ENCODE measurements at regions of chr15 and their contacts with region 1.

Region 1: GRCh38 chr15:59725172-59725486 is 36.0 kb upstream of the BNIP2 start:
- DNase-seq: no peak
- ATAC-seq: no peak
- H3K4me3 ChIP-seq: no peak overlapping the region
- H3K4me3 Mint-ChIP-seq: no peak overlapping the region
- H3K27ac ChIP-seq: no peak overlapping the region
- H3K27ac Mint-ChIP-seq: no peak overlapping the region
- H3K4me1 ChIP-seq: no peaks in the 10 kb centered on the region
- H3K4me1 Mint-ChIP-seq: no peaks in the 10 kb centered on the region
- H3K27me3 ChIP-seq: peaks cover 0 to 18% of the 10 kb centered on the region in 2 experiments
- H3K27me3 Mint-ChIP-seq: peaks cover 23% of the 10 kb centered on the region
- CTCF ChIP-seq: peak; percentile 39

Region 2: GRCh38 chr15:59678620-59679019 is 46.5 kb before region 1 on chr15:
- CTCF ChIA-PET with region 1: no interaction called
- POLR2A ChIA-PET with region 1: no interaction called
- intact Hi-C with region 1: no loop called
- DNase-seq: no peak
- ATAC-seq: no peak
- H3K4me3 ChIP-seq: no peak overlapping the region
- H3K4me3 Mint-ChIP-seq: no peak overlapping the region
- H3K27ac ChIP-seq: no peak overlapping the region
- H3K27ac Mint-ChIP-seq: no peak overlapping the region
- H3K4me1 ChIP-seq: no peaks in the 10 kb centered on the region
- H3K4me1 Mint-ChIP-seq: peaks cover 6% of the 10 kb centered on the region
- H3K27me3 ChIP-seq: no peaks in the 10 kb centered on the region
- H3K27me3 Mint-ChIP-seq: no peaks in the 10 kb centered on the region
- CTCF ChIP-seq: no peak

Region 3: DNA sequence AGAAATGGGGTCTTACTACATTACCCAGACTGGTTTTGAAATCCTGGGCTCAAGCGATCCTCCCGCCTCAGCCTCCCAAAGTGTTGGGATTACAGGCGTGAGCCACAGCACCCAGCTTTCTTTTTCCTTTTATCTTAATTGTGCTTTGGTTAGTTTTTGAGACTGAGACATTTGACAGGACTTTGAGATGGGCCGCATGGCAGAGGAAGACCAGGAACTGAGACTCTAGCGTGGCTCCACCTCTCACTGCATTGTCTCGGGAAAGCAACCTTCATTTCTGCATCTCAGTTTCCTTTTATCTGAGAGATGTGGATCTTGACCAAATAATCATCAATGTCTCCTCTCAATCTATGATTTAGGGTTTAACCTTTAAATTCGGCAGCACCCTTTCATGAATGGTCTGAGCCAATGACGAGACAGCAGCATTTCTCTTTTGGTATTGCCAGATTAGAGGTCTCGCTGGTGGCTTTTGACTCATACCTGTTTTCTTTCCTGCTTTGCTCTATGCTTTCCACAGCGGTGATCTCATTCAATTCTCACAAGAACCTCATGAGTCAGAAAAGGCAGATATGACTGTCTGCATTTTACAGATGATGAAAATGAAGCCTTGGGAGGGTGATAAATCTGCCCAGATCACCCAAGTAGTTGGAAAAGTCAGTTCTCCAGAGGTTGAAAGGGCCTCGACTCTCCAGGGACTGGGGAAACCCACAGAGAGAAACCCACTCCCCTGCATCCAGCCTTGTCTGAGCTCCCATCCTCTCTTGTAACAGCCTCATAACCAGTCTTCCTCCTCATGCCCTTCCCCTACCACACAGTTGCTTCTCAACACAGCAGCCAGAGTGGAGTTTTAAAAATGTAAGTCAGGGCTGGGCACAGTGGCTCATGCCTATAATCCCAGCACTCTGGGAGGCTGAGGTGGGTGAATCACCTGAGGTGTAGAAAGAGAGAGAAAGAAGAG is 194.1 kb after region 1 on chr15:
- CTCF ChIA-PET with region 1: no interaction called
- POLR2A ChIA-PET with region 1: no interaction called
- intact Hi-C with region 1: no loop called
- DNase-seq: peak in 8 of 14 experiments; percentile 7 to 48 (median 31)
- ATAC-seq: peak; percentile 74
- H3K4me3 ChIP-seq: peak overlapping the region; percentile 2
- H3K4me3 Mint-ChIP-seq: peak overlapping the region; percentile 55
- H3K27ac ChIP-seq: no peak overlapping the region
- H3K27ac Mint-ChIP-seq: peak overlapping the region; percentile 8
- H3K4me1 ChIP-seq: peaks cover 19% of the 10 kb centered on the region
- H3K4me1 Mint-ChIP-seq: peaks cover 31% of the 10 kb centered on the region
- H3K27me3 ChIP-seq: no peaks in the 10 kb centered on the region
- H3K27me3 Mint-ChIP-seq: peaks cover 18% of the 10 kb centered on the region
- CTCF ChIP-seq: no peak

Region 4: GRCh38 chr15:60179786-60180391 is 454.8 kb after region 1 on chr15:
- CTCF ChIA-PET with region 1: interaction called, 5 read pairs
- POLR2A ChIA-PET with region 1: no interaction called
- intact Hi-C with region 1: loop called (anchors 1 kb)
- DNase-seq: peak in 11 of 14 experiments; percentile 2 to 72 (median 14)
- ATAC-seq: peak; percentile 64
- H3K4me3 ChIP-seq: no peak overlapping the region
- H3K4me3 Mint-ChIP-seq: no peak overlapping the region
- H3K27ac ChIP-seq: no peak overlapping the region
- H3K27ac Mint-ChIP-seq: no peak overlapping the region
- H3K4me1 ChIP-seq: no peaks in the 10 kb centered on the region
- H3K4me1 Mint-ChIP-seq: no peaks in the 10 kb centered on the region
- H3K27me3 ChIP-seq: no peaks in the 10 kb centered on the region
- H3K27me3 Mint-ChIP-seq: peaks cover 23% of the 10 kb centered on the region
- CTCF ChIP-seq: peak; percentile 99

Region 5: DNA sequence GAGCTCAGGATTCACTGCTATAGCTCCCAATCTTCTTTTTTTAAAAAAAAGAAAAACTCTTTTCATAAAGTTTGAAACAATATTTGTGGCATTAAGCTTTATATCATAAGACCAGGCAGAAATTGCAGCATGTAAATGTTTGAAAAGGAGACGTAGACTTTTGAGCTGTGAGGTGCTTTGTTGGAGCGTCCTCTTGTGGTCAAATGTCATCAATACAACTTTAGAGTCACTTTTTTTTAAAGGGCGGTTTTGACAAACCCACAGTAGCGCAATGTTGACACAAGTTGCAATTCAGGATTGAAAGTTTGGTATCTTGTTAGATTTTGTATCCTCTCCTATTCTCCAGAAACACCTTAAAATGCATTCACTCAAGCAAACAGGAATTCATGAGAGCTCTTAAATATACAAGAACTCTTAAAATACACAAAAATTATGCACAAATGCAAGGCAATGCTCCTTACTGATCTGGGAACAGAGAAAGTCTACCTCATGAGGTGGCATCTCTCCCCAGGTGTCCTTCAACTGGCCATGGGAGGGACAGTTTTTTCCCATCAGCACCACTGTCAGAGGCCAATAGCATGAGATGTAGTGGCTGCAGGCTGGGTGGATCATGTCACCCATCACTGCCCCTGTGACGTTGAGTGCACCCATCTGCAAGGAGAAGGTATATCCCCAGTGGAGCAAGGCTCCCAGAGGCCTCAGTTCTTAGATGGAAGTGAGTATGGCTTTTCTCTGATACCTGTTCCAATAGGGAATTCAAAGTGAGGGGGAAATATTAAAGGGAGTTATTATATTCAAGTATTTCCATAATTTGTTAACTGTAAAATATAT is 601.9 kb after region 1 on chr15:
- CTCF ChIA-PET with region 1: interaction called, 5 read pairs
- POLR2A ChIA-PET with region 1: interaction called, 7 read pairs
- intact Hi-C with region 1: loop called (anchors 1 to 2 kb)
- DNase-seq: peak in 9 of 14 experiments; percentile 0 to 78 (median 8)
- ATAC-seq: peak; percentile 49
- H3K4me3 ChIP-seq: no peak overlapping the region
- H3K4me3 Mint-ChIP-seq: no peak overlapping the region
- H3K27ac ChIP-seq: no peak overlapping the region
- H3K27ac Mint-ChIP-seq: no peak overlapping the region
- H3K4me1 ChIP-seq: no peaks in the 10 kb centered on the region
- H3K4me1 Mint-ChIP-seq: peaks cover 6% of the 10 kb centered on the region
- H3K27me3 ChIP-seq: peaks cover 13 to 23% of the 10 kb centered on the region in 2 experiments
- H3K27me3 Mint-ChIP-seq: peaks cover 77% of the 10 kb centered on the region
- CTCF ChIP-seq: peak; percentile 69

Region 6: GRCh38 chr15:60444289-60444912 is 719.3 kb after region 1 on chr15:
- CTCF ChIA-PET with region 1: no interaction called
- POLR2A ChIA-PET with region 1: no interaction called
- intact Hi-C with region 1: loop called in 1 of 2 experiments (anchors 10 kb)
- DNase-seq: peak in 3 of 14 experiments; percentile 9 to 14 (median 13)
- ATAC-seq: no peak
- H3K4me3 ChIP-seq: no peak overlapping the region
- H3K4me3 Mint-ChIP-seq: no peak overlapping the region
- H3K27ac ChIP-seq: no peak overlapping the region
- H3K27ac Mint-ChIP-seq: no peak overlapping the region
- H3K4me1 ChIP-seq: no peaks in the 10 kb centered on the region
- H3K4me1 Mint-ChIP-seq: peaks cover 4% of the 10 kb centered on the region
- H3K27me3 ChIP-seq: no peaks in the 10 kb centered on the region
- H3K27me3 Mint-ChIP-seq: no peaks in the 10 kb centered on the region
- CTCF ChIP-seq: peak; percentile 52